ENCODE measurements at regions of chr11 and their contacts with region 1.

Region 1: GRCh38 chr11:110130642-110131238 is 37.5 kb downstream of the ZC3H12C start:
- DNase-seq: peak in 4 of 5 donors; percentile 35 to 73 (median 58)
- H3K4me3 ChIP-seq: no peak overlapping the region
- H3K27ac ChIP-seq: no peak overlapping the region
- H3K4me1 ChIP-seq: peaks cover 0 to 9% (median 2%) of the 10 kb centered on the region in 3 donors
- H3K27me3 ChIP-seq: no peaks in the 10 kb centered on the region
- CTCF ChIP-seq: no peak

Region 2: GRCh38 chr11:109885006-109885405 is 245.7 kb before region 1 on chr11:
- intact Hi-C with region 1: no loop called
- DNase-seq: no peak
- H3K4me3 ChIP-seq: no peak overlapping the region
- H3K27ac ChIP-seq: no peak overlapping the region
- H3K4me1 ChIP-seq: no peaks in the 10 kb centered on the region
- H3K27me3 ChIP-seq: no peaks in the 10 kb centered on the region
- CTCF ChIP-seq: no peak

Region 3: DNA sequence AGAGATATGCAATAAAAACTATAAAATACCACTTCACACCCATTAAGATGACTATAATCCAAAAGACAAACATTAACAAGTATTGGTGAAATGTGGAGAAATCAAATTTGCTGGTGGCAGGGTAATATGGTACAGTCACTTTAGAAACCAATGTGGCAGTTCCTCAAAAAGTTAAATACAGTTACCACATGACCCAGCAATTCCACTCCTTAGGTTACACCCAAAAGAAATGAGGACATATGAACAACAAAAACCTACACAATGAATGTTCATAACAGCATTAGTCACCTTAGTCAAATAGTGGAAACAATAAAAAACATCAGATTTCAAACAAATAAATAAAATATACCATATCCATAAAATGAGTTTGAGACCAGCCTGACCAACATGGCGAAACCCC is 113.1 kb after region 1 on chr11:
- intact Hi-C with region 1: no loop called
- DNase-seq: no peak
- H3K4me3 ChIP-seq: no peak overlapping the region
- H3K27ac ChIP-seq: no peak overlapping the region
- H3K4me1 ChIP-seq: no peaks in the 10 kb centered on the region
- H3K27me3 ChIP-seq: no peaks in the 10 kb centered on the region
- CTCF ChIP-seq: no peak

Region 4: DNA sequence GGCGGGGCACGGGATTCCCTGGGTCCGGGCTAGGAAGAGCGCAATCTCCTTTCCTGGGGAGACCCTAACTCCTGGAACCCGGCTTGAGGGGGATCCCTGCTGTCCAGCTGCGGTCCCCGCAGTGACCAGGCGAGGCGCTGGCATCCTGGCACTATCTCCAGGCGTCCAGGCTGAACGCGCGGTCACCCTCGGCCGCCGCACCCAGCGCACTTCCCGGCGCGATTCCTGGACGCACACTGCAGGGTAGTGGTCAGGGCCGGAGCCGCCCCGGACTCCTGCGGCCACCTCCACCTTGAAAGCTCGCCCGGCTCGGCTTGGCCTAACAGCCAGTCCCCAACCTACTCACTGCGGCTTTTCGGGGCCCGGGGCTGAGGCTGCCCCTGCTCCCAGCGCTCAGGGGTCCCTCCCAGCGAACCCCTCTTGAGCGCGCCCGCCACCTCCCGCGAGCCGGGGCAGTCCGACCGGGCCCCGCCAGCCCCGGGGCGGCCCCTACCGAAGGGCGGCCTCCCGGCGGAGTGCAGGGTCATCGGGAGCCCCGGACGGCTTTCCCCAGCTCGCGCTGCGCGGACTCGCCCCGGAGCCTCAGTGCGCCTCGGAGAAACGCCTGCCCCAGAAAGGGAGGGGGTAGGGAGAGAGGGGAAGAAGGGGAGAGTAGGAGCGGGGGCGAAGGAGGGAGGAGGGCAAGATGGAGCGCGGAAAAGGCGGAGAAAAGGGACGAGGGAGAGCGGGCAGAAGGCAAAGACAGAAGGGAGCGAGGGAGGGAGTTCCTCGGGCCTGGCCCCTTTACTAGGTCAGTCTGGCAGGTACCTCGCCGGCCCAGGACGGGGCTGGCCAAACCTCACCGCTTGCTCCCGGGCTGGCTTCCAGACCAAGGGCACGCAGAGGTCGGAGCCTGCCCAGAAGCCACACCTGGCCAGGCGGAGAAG is 1168.6 kb after region 1 on chr11:
- intact Hi-C with region 1: loop called (anchors 10 kb)
- DNase-seq: peak; percentile 81 to 90 (median 84)
- H3K4me3 ChIP-seq: peak overlapping the region; percentile 51 to 67 (median 64)
- H3K27ac ChIP-seq: peak overlapping the region; percentile 91 to 92
- H3K4me1 ChIP-seq: peaks cover 0 to 3% (median 0%) of the 10 kb centered on the region in 3 donors
- H3K27me3 ChIP-seq: no peaks in the 10 kb centered on the region
- CTCF ChIP-seq: peak; percentile 55